Vagina (tissue), 2 donors: ENCODE measurements at regions of chr17 and their contacts with region 1.

Region 1: DNA sequence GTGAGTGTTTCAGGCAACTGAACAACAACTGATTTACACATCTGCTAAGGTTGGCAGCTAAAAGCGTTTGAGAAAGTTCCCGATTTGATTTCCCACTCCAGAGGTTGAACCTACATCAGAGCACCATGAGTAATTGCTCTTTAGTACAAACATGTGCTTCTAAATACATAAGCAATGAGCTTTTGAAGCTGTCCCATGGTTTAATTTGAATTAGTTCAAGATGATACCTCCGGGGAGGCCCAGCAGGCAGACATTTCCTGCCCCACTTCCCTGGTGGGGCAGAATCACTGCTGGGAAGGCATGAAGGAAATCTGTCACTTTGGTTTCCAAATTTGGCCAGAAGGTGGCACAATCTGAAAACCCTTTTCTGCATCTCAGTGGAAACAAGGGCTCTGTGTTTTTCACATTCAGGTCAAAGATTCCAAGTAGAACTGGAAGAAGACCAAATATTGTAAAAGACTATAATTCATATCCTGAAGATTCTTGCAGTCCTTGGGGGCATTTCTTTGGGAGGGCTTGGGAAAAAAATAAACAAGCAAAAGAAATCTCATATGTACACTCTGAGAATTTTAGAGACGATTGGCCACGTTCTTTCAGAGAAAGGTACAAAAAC is 176.2 kb upstream of the FAM20A start:
- DNase-seq: peak in 1 of 2 donors; percentile 87
- H3K4me3 ChIP-seq: no peak overlapping the region
- H3K27ac ChIP-seq: peak overlapping the region; percentile 68
- H3K4me1 ChIP-seq: peaks cover 48% of the 10 kb centered on the region
- H3K27me3 ChIP-seq: no peaks in the 10 kb centered on the region
- CTCF ChIP-seq: peak; percentile 43 to 82 (median 62)
- POLR2A ChIP-seq: no peak

Region 2: GRCh38 chr17:68972119-68972704 is 194.9 kb after region 1 on chr17:
- intact Hi-C with region 1: loop called (anchors 5 kb)
- DNase-seq: no peak
- H3K4me3 ChIP-seq: no peak overlapping the region
- H3K27ac ChIP-seq: no peak overlapping the region
- H3K4me1 ChIP-seq: no peaks in the 10 kb centered on the region
- H3K27me3 ChIP-seq: no peaks in the 10 kb centered on the region
- CTCF ChIP-seq: peak; percentile 42 to 62 (median 48)
- POLR2A ChIP-seq: no peak

Region 3: DNA sequence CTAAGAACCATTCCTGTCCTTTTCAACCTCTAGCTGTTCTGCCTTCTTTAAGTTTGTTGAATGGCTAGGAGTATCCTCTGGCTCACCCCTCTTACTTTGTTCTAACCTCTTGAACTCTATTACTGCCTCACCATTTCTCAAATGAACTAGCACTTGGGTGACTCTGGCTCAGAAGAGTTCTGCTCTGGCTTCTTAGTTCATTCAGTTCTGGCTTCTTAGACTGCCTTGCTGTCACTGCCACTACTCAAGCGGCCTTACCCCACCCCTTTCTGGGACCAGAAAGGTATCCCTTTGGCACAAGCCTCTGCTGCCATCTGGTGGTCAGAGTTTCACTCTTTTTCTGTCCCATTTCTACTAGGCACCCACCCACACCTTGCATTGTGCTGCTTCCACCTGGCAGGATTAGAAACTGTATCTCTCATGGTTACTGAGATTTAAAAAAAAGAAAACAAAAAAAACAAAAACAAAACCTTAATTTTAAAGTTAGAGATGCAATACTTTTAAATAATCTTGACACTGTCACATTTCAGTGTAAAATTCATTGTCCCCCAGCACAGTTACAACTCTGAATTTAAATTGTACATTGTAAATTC is 458.1 kb after region 1 on chr17:
- intact Hi-C with region 1: loop called (anchors 2 kb)
- DNase-seq: no peak
- H3K4me3 ChIP-seq: no peak overlapping the region
- H3K27ac ChIP-seq: no peak overlapping the region
- H3K4me1 ChIP-seq: no peaks in the 10 kb centered on the region
- H3K27me3 ChIP-seq: no peaks in the 10 kb centered on the region
- CTCF ChIP-seq: peak; percentile 50 to 72 (median 54)
- POLR2A ChIP-seq: no peak